Activated naive CD4-positive, alpha-beta T cell treated with anti-CD3 and anti-CD28 coated beads for 36 hours (primary cell): ENCODE measurements at regions of chr9 and their contacts with region 1.

Region 1: GRCh38 chr9:131709771-131710454 is 30.0 kb downstream of the RAPGEF1 start:
- DNase-seq: peak; percentile 38
- H3K4me3 Mint-ChIP-seq: peak overlapping the region; percentile 24
- H3K27ac Mint-ChIP-seq: peak overlapping the region; percentile 75
- H3K4me1 Mint-ChIP-seq: peaks cover 74% of the 10 kb centered on the region
- H3K27me3 Mint-ChIP-seq: no peaks in the 10 kb centered on the region

Region 2: DNA sequence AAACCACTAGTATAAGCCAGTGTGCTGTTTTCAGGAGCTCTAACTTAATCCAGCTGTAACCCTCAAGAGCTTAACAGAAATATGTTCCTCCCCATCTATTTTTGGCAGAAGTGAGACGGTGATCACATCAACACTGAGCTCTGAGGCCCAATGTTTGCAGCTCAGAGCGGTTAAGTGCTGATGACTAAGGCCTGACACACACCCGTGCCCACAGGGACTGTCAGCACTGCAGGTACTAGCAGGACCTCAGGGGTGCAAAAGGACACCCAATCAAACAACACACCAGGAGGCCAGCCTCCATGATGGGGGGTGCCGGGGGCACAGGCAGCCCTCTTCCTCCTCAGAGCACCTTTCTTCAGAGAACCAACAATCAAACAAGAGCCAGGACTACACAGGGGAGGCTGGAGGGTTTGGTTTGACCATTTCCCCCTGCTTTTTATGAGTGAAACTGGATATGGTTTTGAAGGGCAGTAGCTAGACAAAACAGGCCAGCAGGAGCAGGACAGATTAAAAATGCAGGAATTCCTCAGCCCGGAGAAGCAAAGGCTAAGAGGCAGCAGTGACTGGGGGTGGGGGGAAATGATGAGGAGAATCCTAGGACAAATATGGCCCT is 31.3 kb before region 1 on chr9:
- CTCF ChIA-PET with region 1: interaction called, 3 read pairs
- intact Hi-C with region 1: loop called (anchors 2 kb)
- DNase-seq: peak; percentile 92
- H3K4me3 Mint-ChIP-seq: peak overlapping the region; percentile 55
- H3K27ac Mint-ChIP-seq: peak overlapping the region; percentile 93
- H3K4me1 Mint-ChIP-seq: peaks cover 67% of the 10 kb centered on the region
- H3K27me3 Mint-ChIP-seq: no peaks in the 10 kb centered on the region

Region 3: GRCh38 chr9:131692612-131693562 is 17.0 kb before region 1 on chr9:
- CTCF ChIA-PET with region 1: interaction called, 6 read pairs
- intact Hi-C with region 1: loop called (anchors 2 kb)
- DNase-seq: no peak
- H3K4me3 Mint-ChIP-seq: no peak overlapping the region
- H3K27ac Mint-ChIP-seq: no peak overlapping the region
- H3K4me1 Mint-ChIP-seq: peaks cover 64% of the 10 kb centered on the region
- H3K27me3 Mint-ChIP-seq: no peaks in the 10 kb centered on the region